Activated T-helper 1 cell treated with anti-CD3 and anti-CD28 coated beads, Interleukin-12 subunit alpha, Interleukin-12 subunit beta, Interleukin-2, Interleukin-4 antibody, amounts not matched to agents 30 ng/mL and 10 ng/mL and 1 ng/mL, durations not matched to agents 14 hours and 24 hours and 36 hours (primary cell): ENCODE measurements at regions of chr14 and their contacts with region 1.

Region 1: GRCh38 chr14:100067971-100068959 is 3.0 kb downstream of the EVL start:
- DNase-seq: peak; percentile 82
- H3K4me3 Mint-ChIP-seq: peak overlapping the region; percentile 88
- H3K27ac Mint-ChIP-seq: peak overlapping the region; percentile 99
- H3K4me1 Mint-ChIP-seq: peaks cover 84% of the 10 kb centered on the region
- H3K27me3 Mint-ChIP-seq: no peaks in the 10 kb centered on the region

Region 2: DNA sequence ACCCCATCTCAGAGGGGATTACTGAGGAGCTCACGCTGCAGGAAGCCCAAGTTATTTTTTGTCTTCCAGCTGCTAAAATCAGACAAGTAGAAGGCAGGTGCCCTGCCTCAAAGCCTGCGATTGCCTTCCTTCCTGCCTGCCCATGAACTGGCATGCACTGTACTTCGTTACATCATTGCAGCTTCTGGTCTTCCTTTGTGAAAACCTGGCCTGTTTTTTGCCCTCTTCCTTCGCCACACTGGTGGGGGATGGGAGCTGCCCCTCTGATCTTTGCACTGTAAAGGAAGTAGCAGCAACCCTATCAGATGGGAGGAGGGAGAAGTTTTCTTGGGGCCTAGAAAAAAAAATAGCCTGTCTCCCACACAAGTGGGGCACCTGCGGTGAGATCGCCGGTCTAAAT is 1895.0 kb before region 1 on chr14:
- intact Hi-C with region 1: loop called (anchors 10 kb)
- DNase-seq: peak; percentile 45
- H3K4me3 Mint-ChIP-seq: peak overlapping the region; percentile 73
- H3K27ac Mint-ChIP-seq: peak overlapping the region; percentile 90
- H3K4me1 Mint-ChIP-seq: peaks cover 97% of the 10 kb centered on the region
- H3K27me3 Mint-ChIP-seq: no peaks in the 10 kb centered on the region

Region 3: DNA sequence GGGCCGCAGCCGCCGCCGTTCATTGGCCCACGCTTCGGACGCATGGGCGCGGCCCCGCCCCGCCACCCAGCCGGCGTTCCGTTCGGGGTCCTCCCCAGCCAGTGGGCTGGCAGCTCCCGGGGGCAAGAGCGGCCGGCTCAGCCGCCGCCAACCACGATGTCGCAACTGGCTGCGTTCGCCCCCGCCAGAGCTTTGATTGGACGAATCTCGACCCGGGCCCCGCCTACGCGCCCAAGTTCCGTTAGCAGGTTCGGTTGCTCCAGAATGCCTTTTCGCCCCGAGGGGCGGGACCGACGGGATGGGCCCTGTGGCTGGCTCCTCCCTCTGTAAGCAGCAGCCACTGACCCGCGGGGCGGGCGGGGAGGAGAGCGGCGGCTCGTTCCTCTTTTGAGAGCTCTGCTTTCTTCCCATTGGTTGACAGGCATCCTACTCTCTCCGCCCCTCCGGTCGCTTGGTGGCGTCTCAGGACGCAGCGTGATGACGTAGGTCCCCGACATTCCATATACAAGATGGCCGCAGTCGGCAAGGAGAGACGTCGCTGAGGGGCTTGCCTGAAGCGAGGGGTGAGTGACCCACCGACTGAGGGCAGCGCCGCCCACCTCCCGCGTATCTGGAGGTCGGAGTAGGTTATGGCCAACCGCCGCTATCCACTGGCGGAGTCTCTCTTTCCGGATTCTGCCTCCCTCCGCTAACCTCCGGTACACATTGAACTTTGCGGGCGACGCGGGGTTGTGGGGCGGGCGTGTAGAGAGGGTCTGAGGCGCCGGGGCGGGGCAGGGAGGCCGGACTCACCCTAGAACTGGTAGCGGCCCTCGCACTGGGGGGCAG is 587.1 kb before region 1 on chr14 and contains the start of gene CCNK:
- intact Hi-C with region 1: loop called (anchors 5 kb)
- DNase-seq: peak; percentile 100
- H3K4me3 Mint-ChIP-seq: peak within 1 kb of the TSS; percentile 98
- H3K27ac Mint-ChIP-seq: peak within 1 kb of the TSS; percentile 98
- H3K4me1 Mint-ChIP-seq: peaks cover 49% of the 10 kb centered on the region
- H3K27me3 Mint-ChIP-seq: no peaks in the 10 kb centered on the region
- total RNA-seq, gene CCNK: 80.8 and 87.1 TPM in 2 replicates

Region 4: DNA sequence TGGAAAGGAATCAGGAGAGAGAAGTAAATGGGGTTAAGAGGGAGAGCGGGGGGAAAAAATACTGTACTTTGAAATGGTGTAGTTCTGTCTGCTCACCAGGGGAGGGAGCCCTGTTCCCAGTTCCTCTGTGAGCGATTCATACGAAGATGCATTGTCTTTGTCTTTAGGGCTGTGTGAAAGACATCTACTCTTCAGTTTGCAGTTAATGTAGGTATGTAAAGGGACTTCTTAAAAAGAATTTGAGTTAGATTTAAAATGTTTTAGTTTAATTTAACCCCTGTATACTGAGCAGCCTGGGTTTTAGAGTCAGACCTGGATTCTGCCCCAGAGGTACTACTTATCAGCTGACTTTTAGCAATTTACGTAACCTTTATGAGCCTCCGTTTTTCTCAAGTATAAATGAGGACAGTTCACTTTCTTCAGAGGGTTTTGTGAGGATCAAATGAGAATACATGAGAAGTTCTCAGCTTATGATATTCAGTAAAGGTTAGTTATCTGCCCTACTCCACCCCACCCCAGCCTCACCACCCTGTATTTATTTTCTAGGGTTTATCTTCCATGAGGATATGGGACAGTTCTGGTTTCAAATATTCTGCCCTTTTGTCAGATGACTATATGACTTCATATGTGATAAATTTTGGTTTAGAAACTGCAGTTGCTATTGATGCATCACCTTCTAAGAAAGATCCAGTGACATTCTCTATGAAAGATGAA is 85.6 kb before region 1 on chr14:
- intact Hi-C with region 1: loop called (anchors 2 kb)
- DNase-seq: peak; percentile 36
- H3K4me3 Mint-ChIP-seq: no peak overlapping the region
- H3K27ac Mint-ChIP-seq: no peak overlapping the region
- H3K4me1 Mint-ChIP-seq: peaks cover 25% of the 10 kb centered on the region
- H3K27me3 Mint-ChIP-seq: no peaks in the 10 kb centered on the region

Region 5: GRCh38 chr14:100078991-100079725 is 10.9 kb after region 1 on chr14:
- intact Hi-C with region 1: loop called (anchors 1 kb)
- DNase-seq: peak; percentile 82
- H3K4me3 Mint-ChIP-seq: peak overlapping the region; percentile 75
- H3K27ac Mint-ChIP-seq: peak overlapping the region; percentile 92
- H3K4me1 Mint-ChIP-seq: peaks cover 97% of the 10 kb centered on the region
- H3K27me3 Mint-ChIP-seq: no peaks in the 10 kb centered on the region

Region 6: DNA sequence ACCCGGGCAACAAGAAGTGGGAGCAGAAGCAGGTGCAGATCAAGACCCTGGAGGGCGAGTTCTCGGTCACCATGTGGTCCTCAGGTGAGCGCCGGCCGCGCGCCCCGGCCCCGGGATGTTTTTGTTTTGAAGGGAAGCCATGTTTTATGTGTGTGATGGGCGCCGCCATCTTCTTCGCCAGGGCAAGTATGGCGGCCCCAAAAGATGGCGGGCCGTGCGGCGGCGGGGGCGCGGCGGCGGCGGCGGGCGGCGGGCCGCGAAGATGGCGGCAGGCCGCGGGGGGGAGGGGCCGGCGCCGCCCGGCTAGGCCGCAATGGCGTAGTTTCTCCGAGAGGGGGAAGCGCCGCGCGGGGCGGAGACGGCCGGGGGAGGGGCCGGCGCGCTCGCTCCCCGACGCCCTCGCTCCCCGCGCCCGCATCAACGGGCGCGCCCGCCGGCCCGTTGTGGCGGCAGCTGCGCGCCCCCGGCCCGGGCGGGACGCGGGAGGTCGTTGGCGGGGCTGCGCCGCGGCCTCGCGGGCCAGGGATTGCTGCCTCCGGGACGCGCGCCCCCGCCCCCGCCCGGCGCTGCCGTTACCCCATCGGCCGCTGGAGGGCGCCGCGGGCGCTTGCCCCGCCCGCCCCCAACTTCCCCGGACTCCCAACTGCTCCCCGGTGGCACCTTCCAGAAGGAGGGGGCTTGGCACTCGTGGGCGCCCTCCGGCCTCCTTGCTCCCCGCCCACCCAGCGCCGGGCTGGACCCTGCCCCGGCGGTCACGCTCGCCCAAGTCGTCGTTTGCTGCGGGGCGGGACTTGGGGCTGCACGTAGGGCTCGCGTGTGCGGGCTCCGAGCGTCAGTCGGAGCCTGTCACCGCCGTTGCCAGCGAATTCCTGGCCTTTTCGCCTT is 171.8 kb after region 1 on chr14:
- intact Hi-C with region 1: loop called (anchors 2 kb)
- DNase-seq: peak; percentile 83
- H3K4me3 Mint-ChIP-seq: peak overlapping the region; percentile 92
- H3K27ac Mint-ChIP-seq: peak overlapping the region; percentile 90
- H3K4me1 Mint-ChIP-seq: peaks cover 54% of the 10 kb centered on the region
- H3K27me3 Mint-ChIP-seq: no peaks in the 10 kb centered on the region

Region 7: DNA sequence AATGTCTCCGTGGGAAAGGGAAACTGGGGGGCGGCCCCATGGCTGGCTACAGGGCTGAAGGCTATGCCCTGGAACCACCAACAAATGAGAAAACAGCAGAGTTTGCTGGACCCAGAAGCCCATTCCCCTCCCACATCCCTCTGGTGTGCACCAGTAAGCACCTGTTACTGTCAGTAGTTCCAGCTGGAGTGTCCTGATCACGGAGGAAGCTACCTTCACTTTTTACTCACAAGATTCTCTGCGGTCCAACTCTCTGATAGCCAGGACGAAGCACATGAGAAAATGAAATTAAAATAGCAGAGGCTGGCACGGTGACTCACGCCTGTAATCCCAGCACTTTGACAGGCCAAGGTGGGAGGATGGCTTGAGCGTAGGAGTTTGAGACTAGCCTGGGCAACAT is 735.0 kb after region 1 on chr14:
- intact Hi-C with region 1: no loop called
- DNase-seq: no peak
- H3K4me3 Mint-ChIP-seq: no peak overlapping the region
- H3K27ac Mint-ChIP-seq: no peak overlapping the region
- H3K4me1 Mint-ChIP-seq: no peaks in the 10 kb centered on the region
- H3K27me3 Mint-ChIP-seq: peaks cover 7% of the 10 kb centered on the region